Activated T-helper 2 cell treated with anti-CD3 and anti-CD28 coated beads, Interferon-gamma antibody, Interleukin-2, Interleukin-4, amounts not matched to agents 10 μg/mL and 5 μg/mL and 100 μg/mL, durations not matched to agents 14 hours and 24 hours and 36 hours (primary cell): ENCODE measurements at regions of chr17 and their contacts with region 1.

Region 1: GRCh38 chr17:19447085-19447583 is 36.1 kb downstream of the RNF112 start:
- DNase-seq: peak; percentile 39
- H3K4me3 Mint-ChIP-seq: no peak overlapping the region
- H3K27ac Mint-ChIP-seq: no peak overlapping the region
- H3K4me1 Mint-ChIP-seq: peaks cover 2% of the 10 kb centered on the region
- H3K27me3 Mint-ChIP-seq: peaks cover 15% of the 10 kb centered on the region

Region 2: GRCh38 chr17:19362277-19363113 is 84.6 kb before region 1 on chr17 and contains the start of gene B9D1:
- intact Hi-C with region 1: loop called (anchors 1 kb)
- DNase-seq: peak; percentile 84
- H3K4me3 Mint-ChIP-seq: peak within 1 kb of the TSS; percentile 85
- H3K27ac Mint-ChIP-seq: peak within 1 kb of the TSS; percentile 29
- H3K4me1 Mint-ChIP-seq: peaks cover 3% of the 10 kb centered on the region
- H3K27me3 Mint-ChIP-seq: peaks cover 16% of the 10 kb centered on the region
- total RNA-seq, gene B9D1: 6.7 TPM in 2 replicates

Region 3: GRCh38 chr17:19464031-19465026 is 17.2 kb after region 1 on chr17:
- intact Hi-C with region 1: no loop called
- DNase-seq: no peak
- H3K4me3 Mint-ChIP-seq: no peak overlapping the region
- H3K27ac Mint-ChIP-seq: no peak overlapping the region
- H3K4me1 Mint-ChIP-seq: peaks cover 17% of the 10 kb centered on the region
- H3K27me3 Mint-ChIP-seq: no peaks in the 10 kb centered on the region